ENCODE measurements at regions of chr7 and their contacts with region 1.

Region 1: DNA sequence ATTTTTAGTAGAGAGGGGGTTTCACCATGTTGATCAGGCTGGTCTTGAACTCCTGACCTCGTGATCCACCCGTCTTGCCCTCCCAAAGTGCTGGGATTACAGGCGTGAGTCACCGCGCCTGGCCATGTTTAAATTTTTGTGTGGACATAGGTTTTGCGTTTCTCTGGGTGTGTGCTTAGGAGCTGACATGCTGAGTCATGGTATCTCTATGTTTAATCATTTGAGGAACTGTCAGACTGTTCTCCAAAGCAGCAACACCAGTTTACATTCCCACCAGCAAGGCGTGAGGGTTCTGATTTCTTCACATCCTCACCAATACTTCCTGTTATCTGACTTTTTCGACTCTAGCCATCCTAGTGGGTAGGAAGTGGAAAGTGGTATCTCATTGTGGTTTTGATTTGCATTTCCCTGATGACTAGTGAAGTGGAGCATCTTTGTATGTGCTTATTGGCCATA is 153.7 kb downstream of the DNAJB6 start:
- DNase-seq: peak; percentile 88
- H3K4me3 Mint-ChIP-seq: peak overlapping the region; percentile 51
- H3K27ac Mint-ChIP-seq: peak overlapping the region; percentile 71
- H3K4me1 Mint-ChIP-seq: peaks cover 31% of the 10 kb centered on the region
- H3K27me3 Mint-ChIP-seq: peaks cover 27% of the 10 kb centered on the region

Region 2: DNA sequence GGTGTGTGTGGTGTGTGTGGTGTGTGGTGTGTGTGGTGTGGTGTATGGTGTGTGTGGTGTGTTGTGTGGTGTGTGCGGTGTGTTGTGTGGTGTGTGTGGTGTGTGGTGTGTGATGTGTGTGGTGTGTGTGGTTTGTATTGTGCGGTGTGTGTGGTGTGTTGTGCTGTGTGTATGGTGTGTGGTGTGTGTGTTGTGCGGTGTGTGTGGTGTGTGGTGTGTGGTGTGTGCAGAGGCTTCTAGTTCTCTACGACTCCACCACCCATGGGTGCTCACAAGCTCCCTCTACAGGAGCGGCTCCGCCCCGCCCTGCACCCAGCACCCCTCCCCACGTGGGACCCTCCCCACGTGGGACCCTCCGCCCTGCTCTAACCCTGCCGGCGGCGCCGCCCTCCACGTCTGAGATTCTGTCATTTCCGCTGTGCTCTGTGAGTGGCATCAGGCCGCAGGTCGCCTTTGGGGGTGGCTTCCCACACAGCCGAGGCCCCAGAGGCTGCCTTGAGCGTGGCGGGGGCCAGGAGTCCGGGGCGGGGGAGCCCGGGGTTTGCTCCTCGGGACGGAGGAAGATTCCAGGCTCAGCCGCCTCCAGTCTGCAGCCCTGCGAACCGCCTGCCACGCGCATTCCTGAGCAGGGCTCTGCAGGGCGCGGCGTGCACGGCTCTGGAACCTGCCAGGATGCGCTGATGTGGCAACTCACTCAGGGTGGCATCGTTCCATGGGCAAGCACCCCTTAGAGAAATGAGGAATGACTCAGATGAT is 190.7 kb before region 1 on chr7:
- intact Hi-C with region 1: loop called (anchors 10 kb)
- DNase-seq: no peak
- H3K4me3 Mint-ChIP-seq: no peak overlapping the region
- H3K27ac Mint-ChIP-seq: peak overlapping the region; percentile 71
- H3K4me1 Mint-ChIP-seq: peaks cover 30% of the 10 kb centered on the region
- H3K27me3 Mint-ChIP-seq: no peaks in the 10 kb centered on the region

Region 3: GRCh38 chr7:157477550-157478212 is 12.8 kb before region 1 on chr7:
- intact Hi-C with region 1: loop called (anchors 1 kb)
- DNase-seq: peak; percentile 78
- H3K4me3 Mint-ChIP-seq: peak overlapping the region; percentile 56
- H3K27ac Mint-ChIP-seq: peak overlapping the region; percentile 39
- H3K4me1 Mint-ChIP-seq: peaks cover 25% of the 10 kb centered on the region
- H3K27me3 Mint-ChIP-seq: no peaks in the 10 kb centered on the region

Region 4: DNA sequence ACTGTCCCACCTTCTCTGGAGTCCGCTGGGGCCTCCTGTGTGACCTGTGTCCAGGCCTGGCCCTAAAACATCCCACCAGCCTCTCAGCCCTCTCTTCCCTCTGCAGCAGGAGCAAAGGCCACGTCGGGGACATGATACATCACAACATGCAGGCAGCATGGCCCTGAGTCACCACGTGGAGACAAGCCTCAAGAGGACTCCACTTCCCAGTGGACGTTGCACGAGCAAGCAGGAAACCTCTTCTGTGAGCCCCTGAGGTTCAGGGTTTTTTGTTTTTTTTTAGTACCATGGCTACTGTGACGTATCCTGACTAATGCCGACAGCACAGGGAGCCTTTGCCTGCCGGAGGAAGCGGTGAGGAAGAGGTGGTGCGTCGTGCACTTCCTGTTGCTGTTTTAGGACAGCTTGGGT is 12.2 kb after region 1 on chr7:
- intact Hi-C with region 1: loop called (anchors 1 kb)
- DNase-seq: peak; percentile 91
- H3K4me3 Mint-ChIP-seq: peak overlapping the region; percentile 78
- H3K27ac Mint-ChIP-seq: peak overlapping the region; percentile 87
- H3K4me1 Mint-ChIP-seq: peaks cover 22% of the 10 kb centered on the region
- H3K27me3 Mint-ChIP-seq: peaks cover 13% of the 10 kb centered on the region

Region 5: GRCh38 chr7:157568770-157569584 is 78.5 kb after region 1 on chr7:
- intact Hi-C with region 1: loop called (anchors 5 kb)
- DNase-seq: peak; percentile 88
- H3K4me3 Mint-ChIP-seq: peak overlapping the region; percentile 88
- H3K27ac Mint-ChIP-seq: peak overlapping the region; percentile 82
- H3K4me1 Mint-ChIP-seq: peaks cover 35% of the 10 kb centered on the region
- H3K27me3 Mint-ChIP-seq: peaks cover 4% of the 10 kb centered on the region